ENCODE measurements at regions of chr4 and their contacts with region 1.

Region 1: GRCh38 chr4:184538023-184538599 is 63.8 kb upstream of the IRF2 start:
- DNase-seq: peak; percentile 41 to 87 (median 58)
- ATAC-seq: peak; percentile 41
- H3K4me3 ChIP-seq: peak overlapping the region; percentile 82
- H3K4me3 Mint-ChIP-seq: peak overlapping the region; percentile 96
- H3K27ac ChIP-seq: peak overlapping the region; percentile 87 to 96
- H3K27ac Mint-ChIP-seq: peak overlapping the region; percentile 99
- H3K4me1 ChIP-seq: peaks cover 29% of the 10 kb centered on the region
- H3K4me1 Mint-ChIP-seq: peaks cover 50% of the 10 kb centered on the region
- H3K27me3 ChIP-seq: no peaks in the 10 kb centered on the region
- H3K27me3 Mint-ChIP-seq: no peaks in the 10 kb centered on the region
- CTCF ChIP-seq: peak; percentile 63

Region 2: DNA sequence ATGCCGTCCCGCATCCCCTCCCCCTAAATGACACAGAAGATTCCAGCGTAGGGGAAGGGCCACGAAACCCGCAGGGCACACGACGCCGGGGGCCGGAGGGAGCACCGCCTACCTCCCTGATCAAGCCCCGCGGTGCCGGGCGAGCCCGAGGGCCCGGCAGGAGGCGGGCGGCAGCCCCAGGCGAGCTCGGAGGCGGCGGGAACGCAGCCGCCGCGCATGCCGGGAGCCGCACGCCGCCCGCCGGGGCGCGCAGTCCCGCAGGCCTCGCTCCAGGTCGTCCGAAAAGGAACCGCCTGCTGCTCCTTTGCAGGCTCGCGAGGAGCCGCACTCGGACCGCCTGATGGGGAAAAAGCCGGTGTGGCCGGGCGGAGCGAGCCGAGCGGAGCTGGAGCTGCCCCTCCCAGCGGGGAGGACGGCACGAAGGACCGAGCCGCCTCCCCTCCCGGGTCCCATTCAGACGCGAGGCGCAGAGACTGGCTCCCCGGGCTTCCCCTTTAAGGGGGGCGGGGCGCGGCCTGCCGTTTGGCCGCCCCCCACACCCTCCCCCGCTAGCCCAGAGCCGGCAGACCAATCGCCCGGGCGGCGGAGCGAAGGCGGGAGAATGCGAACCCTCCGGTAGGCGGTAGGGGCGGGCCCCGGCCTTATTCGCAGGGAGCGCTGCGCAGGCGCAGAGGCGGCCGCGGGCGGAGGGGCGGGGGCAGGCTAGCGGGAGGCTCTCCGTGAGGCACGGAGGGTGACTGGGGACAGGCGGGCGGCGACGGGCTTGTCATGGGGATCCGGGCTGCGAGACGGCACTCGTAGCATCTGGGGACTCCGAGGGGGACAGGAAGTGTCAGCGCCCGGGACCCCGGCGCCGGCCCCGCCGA is 1033.8 kb before region 1 on chr4:
- CTCF ChIA-PET with region 1: no interaction called
- POLR2A ChIA-PET with region 1: no interaction called
- intact Hi-C with region 1: loop called in 1 of 2 experiments (anchors 10 kb)
- DNase-seq: peak; percentile 98 to 100 (median 99)
- ATAC-seq: peak; percentile 77
- H3K4me3 ChIP-seq: peak overlapping the region; percentile 90
- H3K4me3 Mint-ChIP-seq: peak overlapping the region; percentile 100
- H3K27ac ChIP-seq: peak overlapping the region; percentile 87 to 94
- H3K27ac Mint-ChIP-seq: peak overlapping the region; percentile 97
- H3K4me1 ChIP-seq: peaks cover 14% of the 10 kb centered on the region
- H3K4me1 Mint-ChIP-seq: peaks cover 46% of the 10 kb centered on the region
- H3K27me3 ChIP-seq: no peaks in the 10 kb centered on the region
- H3K27me3 Mint-ChIP-seq: no peaks in the 10 kb centered on the region
- CTCF ChIP-seq: peak; percentile 8

Region 3: DNA sequence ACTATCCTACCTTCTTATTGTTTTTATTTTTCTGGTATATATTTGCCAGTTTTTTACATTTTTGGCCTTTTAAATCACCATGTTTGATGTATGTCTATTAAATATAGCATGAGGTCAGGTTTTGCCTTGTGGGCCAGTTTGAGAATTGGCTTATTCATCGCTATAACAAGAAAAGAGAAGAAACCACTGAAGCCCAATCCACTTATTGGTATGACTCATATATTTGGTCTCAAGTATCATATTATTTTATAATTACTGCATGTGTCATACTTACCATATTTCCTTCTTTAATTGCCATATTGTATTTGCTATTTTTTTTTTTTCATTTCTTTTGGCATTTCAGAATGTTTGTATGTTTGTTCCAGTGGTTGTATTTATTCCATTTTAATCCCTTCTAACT is 163.1 kb before region 1 on chr4:
- CTCF ChIA-PET with region 1: no interaction called
- POLR2A ChIA-PET with region 1: no interaction called
- intact Hi-C with region 1: no loop called
- DNase-seq: no peak
- ATAC-seq: no peak
- H3K4me3 ChIP-seq: no peak overlapping the region
- H3K4me3 Mint-ChIP-seq: no peak overlapping the region
- H3K27ac ChIP-seq: no peak overlapping the region
- H3K27ac Mint-ChIP-seq: no peak overlapping the region
- H3K4me1 ChIP-seq: no peaks in the 10 kb centered on the region
- H3K4me1 Mint-ChIP-seq: peaks cover 3% of the 10 kb centered on the region
- H3K27me3 ChIP-seq: no peaks in the 10 kb centered on the region
- H3K27me3 Mint-ChIP-seq: no peaks in the 10 kb centered on the region
- CTCF ChIP-seq: no peak

Region 4: GRCh38 chr4:184417802-184418511 is 120.2 kb before region 1 on chr4:
- CTCF ChIA-PET with region 1: interaction called, 4 read pairs
- POLR2A ChIA-PET with region 1: interaction called, 11 read pairs
- intact Hi-C with region 1: loop called (anchors 2 to 5 kb)
- DNase-seq: peak in 4 of 14 experiments; percentile 28 to 74 (median 64)
- ATAC-seq: peak; percentile 58
- H3K4me3 ChIP-seq: peak overlapping the region; percentile 53
- H3K4me3 Mint-ChIP-seq: peak overlapping the region; percentile 79
- H3K27ac ChIP-seq: peak overlapping the region; percentile 66 to 78
- H3K27ac Mint-ChIP-seq: peak overlapping the region; percentile 92
- H3K4me1 ChIP-seq: peaks cover 72% of the 10 kb centered on the region
- H3K4me1 Mint-ChIP-seq: peaks cover 75% of the 10 kb centered on the region
- H3K27me3 ChIP-seq: no peaks in the 10 kb centered on the region
- H3K27me3 Mint-ChIP-seq: no peaks in the 10 kb centered on the region
- CTCF ChIP-seq: no peak

Region 5: GRCh38 chr4:184514121-184514988 is 23.8 kb before region 1 on chr4:
- CTCF ChIA-PET with region 1: no interaction called
- POLR2A ChIA-PET with region 1: interaction called, 10 read pairs
- intact Hi-C with region 1: no loop called
- DNase-seq: peak in 4 of 14 experiments; percentile 13 to 72 (median 56)
- ATAC-seq: peak; percentile 37
- H3K4me3 ChIP-seq: no peak overlapping the region
- H3K4me3 Mint-ChIP-seq: no peak overlapping the region
- H3K27ac ChIP-seq: no peak overlapping the region
- H3K27ac Mint-ChIP-seq: no peak overlapping the region
- H3K4me1 ChIP-seq: peaks cover 16% of the 10 kb centered on the region
- H3K4me1 Mint-ChIP-seq: peaks cover 24% of the 10 kb centered on the region
- H3K27me3 ChIP-seq: no peaks in the 10 kb centered on the region
- H3K27me3 Mint-ChIP-seq: no peaks in the 10 kb centered on the region
- CTCF ChIP-seq: no peak

Region 6: GRCh38 chr4:184641022-184641421 is 102.9 kb after region 1 on chr4:
- CTCF ChIA-PET with region 1: no interaction called
- POLR2A ChIA-PET with region 1: no interaction called
- intact Hi-C with region 1: no loop called
- DNase-seq: no peak
- ATAC-seq: no peak
- H3K4me3 ChIP-seq: no peak overlapping the region
- H3K4me3 Mint-ChIP-seq: no peak overlapping the region
- H3K27ac ChIP-seq: no peak overlapping the region
- H3K27ac Mint-ChIP-seq: peak overlapping the region; percentile 17
- H3K4me1 ChIP-seq: peaks cover 22% of the 10 kb centered on the region
- H3K4me1 Mint-ChIP-seq: peaks cover 61% of the 10 kb centered on the region
- H3K27me3 ChIP-seq: no peaks in the 10 kb centered on the region
- H3K27me3 Mint-ChIP-seq: no peaks in the 10 kb centered on the region
- CTCF ChIP-seq: no peak

Region 7: DNA sequence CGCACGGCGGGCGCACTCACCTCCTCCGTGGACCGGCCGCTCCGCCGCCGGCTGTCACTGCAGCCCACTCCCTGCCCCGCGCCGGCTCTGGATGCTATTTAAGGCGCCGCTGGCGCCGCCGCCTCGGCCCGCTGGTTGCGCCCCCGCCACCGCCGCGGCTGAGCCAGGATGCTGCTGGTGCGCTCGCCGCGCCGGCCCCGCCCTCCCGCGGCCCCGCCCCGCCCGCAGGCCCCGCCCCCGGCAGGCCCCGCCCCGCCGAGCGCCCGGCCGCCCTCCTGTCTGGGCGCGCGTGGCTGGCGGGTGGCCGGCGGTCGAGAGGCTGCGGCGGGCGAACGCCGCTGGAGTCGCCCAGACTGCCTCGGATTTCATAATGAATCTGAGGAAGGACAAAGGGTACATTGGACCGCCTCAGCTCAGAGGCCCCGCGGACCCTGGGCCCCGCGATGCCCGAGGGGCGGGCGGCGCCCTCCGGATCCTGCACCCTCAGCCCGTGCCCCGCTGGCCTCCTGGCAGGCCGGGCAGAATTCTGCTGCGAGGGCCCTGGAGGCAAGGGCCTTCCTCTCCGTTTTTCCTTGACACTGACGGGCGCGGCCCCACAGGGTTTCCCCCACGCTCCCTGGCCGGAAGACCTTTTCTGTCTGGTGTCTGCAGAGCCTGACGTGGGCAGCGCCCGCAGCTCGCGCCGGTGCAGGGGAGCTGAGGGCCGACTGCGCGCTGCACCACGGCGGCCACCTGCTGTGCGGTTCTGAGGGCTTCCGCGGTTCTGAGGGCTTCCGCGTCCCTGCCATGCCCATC is 288.0 kb after region 1 on chr4 and contains the start of gene ACSL1:
- CTCF ChIA-PET with region 1: no interaction called
- POLR2A ChIA-PET with region 1: no interaction called
- intact Hi-C with region 1: loop called in 1 of 2 experiments (anchors 10 kb)
- DNase-seq: peak; percentile 58 to 90 (median 72)
- ATAC-seq: peak; percentile 85
- H3K4me3 ChIP-seq: peak within 1 kb of the TSS; percentile 59
- H3K4me3 Mint-ChIP-seq: peak within 1 kb of the TSS; percentile 97
- H3K27ac ChIP-seq: peak within 1 kb of the TSS in 1 of 2 donors; percentile 31
- H3K27ac Mint-ChIP-seq: peak within 1 kb of the TSS; percentile 92
- H3K4me1 ChIP-seq: peaks cover 23% of the 10 kb centered on the region
- H3K4me1 Mint-ChIP-seq: peaks cover 40% of the 10 kb centered on the region
- H3K27me3 ChIP-seq: no peaks in the 10 kb centered on the region
- H3K27me3 Mint-ChIP-seq: no peaks in the 10 kb centered on the region
- CTCF ChIP-seq: no peak
- total RNA-seq, gene ACSL1: 12.4 to 12.5 TPM

Region 8: GRCh38 chr4:185425647-185426352 is 887.7 kb after region 1 on chr4 and contains the start of gene UFSP2:
- CTCF ChIA-PET with region 1: no interaction called
- POLR2A ChIA-PET with region 1: no interaction called
- intact Hi-C with region 1: loop called in 1 of 2 experiments (anchors 10 kb)
- DNase-seq: peak; percentile 78 to 97 (median 88)
- ATAC-seq: peak; percentile 85
- H3K4me3 ChIP-seq: peak within 1 kb of the TSS; percentile 99
- H3K4me3 Mint-ChIP-seq: peak within 1 kb of the TSS; percentile 94
- H3K27ac ChIP-seq: peak within 1 kb of the TSS; percentile 88 to 99
- H3K27ac Mint-ChIP-seq: peak within 1 kb of the TSS; percentile 91
- H3K4me1 ChIP-seq: peaks cover 18% of the 10 kb centered on the region
- H3K4me1 Mint-ChIP-seq: peaks cover 31% of the 10 kb centered on the region
- H3K27me3 ChIP-seq: no peaks in the 10 kb centered on the region
- H3K27me3 Mint-ChIP-seq: peaks cover 6% of the 10 kb centered on the region
- CTCF ChIP-seq: no peak
- total RNA-seq, gene UFSP2: 14.5 to 16.6 TPM